ENCODE measurements at regions of chrX and their contacts with region 1.

Region 1: DNA sequence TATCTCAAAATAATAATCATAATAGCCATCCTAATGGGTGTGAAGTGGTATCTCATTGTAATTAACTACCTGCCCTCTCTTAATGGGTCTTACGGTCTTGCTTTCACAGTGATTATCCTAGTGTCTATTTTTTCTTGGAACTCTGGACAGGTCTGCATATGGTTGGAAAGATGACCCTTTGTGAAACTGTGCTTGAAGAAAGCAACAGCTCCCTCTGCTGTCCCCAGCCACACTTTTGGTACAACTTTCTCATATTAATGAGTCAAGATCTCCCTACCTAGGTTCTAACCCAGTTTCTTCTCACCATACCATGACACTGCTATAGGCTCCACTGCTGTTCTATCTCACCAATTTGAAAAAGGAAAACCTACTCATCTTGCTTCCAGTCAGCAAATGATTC is 2.4 kb downstream of the TFDP3 start:
- DNase-seq: no peak
- ATAC-seq: peak in 2 of 4 donors; percentile 24 to 32
- H3K4me3 ChIP-seq: no peak overlapping the region
- H3K27ac ChIP-seq: no peak overlapping the region
- H3K4me1 ChIP-seq: no peaks in the 10 kb centered on the region
- H3K27me3 ChIP-seq: no peaks in the 10 kb centered on the region
- CTCF ChIP-seq: peak in 3 of 4 donors; percentile 12 to 38 (median 25)
- POLR2A ChIP-seq: no peak

Region 2: GRCh38 chrX:133297295-133297694 is 81.5 kb after region 1 on chrX:
- intact Hi-C with region 1: loop called in 1 of 2 experiments (anchors 10 kb)
- DNase-seq: no peak
- ATAC-seq: no peak
- H3K4me3 ChIP-seq: no peak overlapping the region
- H3K27ac ChIP-seq: no peak overlapping the region
- H3K4me1 ChIP-seq: no peaks in the 10 kb centered on the region
- H3K27me3 ChIP-seq: no peaks in the 10 kb centered on the region
- CTCF ChIP-seq: no peak
- POLR2A ChIP-seq: no peak

Measured in right lobe of liver (tissue), 6 donors.